AG04449 (cell line): ENCODE measurements at regions of chr6 and their contacts with region 1.

Region 1: DNA sequence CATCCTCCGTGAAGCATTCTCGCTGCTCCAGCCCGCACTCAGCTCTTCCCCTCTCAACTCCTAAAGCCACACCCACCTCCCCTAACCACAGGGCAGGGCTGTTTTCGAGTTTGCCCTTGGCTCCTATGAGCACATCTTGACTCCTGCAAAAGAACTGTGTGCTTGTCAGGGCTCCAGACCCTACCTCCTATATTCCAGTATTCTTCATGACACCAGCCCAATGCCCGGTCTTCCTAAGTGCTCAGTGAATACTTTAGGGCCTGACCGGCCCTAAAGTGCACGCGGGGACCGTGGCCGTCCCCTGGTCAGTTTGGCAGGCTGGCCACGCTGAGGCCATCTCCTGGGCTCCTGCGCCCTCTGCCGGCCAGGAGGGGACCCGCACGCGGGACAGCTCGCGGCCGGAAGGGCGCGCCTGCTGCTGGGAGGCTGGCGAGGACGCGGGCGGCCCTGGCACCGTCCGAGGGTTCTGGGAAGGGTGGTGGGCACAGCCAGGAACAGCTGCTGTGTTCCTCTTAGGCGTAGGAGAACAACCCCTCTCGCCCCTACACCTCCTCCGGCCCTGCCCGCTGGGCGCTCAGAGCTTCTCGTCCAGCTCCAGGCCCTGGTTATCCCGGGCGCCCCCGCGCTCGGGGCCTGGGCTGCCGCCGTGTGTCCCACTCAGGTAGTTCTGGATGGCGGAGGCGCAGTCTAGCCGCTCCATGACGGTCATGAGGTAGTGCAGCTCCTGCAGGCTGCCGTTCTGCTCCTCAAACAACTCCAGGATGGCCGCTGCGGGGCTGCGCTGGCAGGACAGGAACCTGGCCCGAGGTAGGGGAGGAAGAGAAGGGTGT is 11.0 kb downstream of the UNC5CL start:
- DNase-seq: no peak
- H3K4me3 ChIP-seq: peak overlapping the region; percentile 57
- CTCF ChIP-seq: peak; percentile 98

Region 2: DNA sequence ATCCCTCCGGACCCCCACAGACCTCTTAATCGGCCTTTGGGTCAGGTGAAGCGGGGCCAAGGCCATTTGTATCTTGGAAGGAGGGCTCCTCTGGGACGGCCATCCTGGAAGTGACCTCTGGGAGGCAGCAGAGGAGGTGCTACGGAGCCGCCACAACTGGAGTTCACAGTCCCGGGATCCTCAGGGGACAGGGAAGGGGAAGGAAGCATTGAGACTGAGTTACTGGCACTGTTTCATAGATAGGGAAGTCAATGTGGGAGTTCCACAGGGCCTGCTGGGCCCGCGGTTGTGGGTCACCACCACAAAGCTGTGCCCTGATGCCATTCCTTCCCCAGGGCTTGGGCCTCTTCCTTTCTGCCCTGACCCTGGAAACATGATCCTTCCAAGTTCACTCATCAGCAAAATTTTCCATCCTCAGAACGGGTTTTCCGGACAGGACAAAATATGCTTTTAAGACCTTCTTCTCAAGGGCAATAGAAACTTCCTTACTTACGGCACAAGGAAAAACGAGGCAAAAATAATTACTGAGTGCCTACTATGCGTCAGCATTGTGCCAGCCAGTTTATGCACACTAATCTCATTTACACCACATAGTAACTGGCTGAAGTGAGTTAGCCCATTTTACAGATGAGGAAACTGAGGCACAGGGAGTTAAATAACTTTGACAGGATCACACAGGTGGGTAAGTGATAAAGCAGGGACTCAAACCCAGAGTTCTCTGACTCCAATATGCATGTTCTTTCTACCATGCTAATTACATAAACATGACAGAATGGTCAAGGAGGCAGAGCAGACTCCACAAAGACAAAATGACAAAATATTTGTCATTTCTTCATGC is 132.8 kb before region 1 on chr6:
- CTCF ChIA-PET with region 1: interaction called, 389 read pairs
- POLR2A ChIA-PET with region 1: no interaction called
- DNase-seq: no peak
- H3K4me3 ChIP-seq: no peak overlapping the region
- CTCF ChIP-seq: peak; percentile 90

Region 3: GRCh38 chr6:40912158-40912946 is 115.7 kb before region 1 on chr6:
- CTCF ChIA-PET with region 1: interaction called, 11 read pairs
- POLR2A ChIA-PET with region 1: no interaction called
- DNase-seq: no peak
- H3K4me3 ChIP-seq: no peak overlapping the region
- CTCF ChIP-seq: peak; percentile 31

Region 4: GRCh38 chr6:41009669-41010068 is 18.3 kb before region 1 on chr6:
- CTCF ChIA-PET with region 1: interaction called, 11 read pairs
- POLR2A ChIA-PET with region 1: no interaction called
- DNase-seq: no peak
- H3K4me3 ChIP-seq: no peak overlapping the region
- CTCF ChIP-seq: no peak

Region 5: GRCh38 chr6:41039060-41039998 is 11.3 kb after region 1 on chr6 and contains the start of gene UNC5CL:
- CTCF ChIA-PET with region 1: interaction called, 99 read pairs
- POLR2A ChIA-PET with region 1: no interaction called
- DNase-seq: no peak
- H3K4me3 ChIP-seq: no peak within 1 kb of the TSS
- CTCF ChIP-seq: peak; percentile 66

Region 6: DNA sequence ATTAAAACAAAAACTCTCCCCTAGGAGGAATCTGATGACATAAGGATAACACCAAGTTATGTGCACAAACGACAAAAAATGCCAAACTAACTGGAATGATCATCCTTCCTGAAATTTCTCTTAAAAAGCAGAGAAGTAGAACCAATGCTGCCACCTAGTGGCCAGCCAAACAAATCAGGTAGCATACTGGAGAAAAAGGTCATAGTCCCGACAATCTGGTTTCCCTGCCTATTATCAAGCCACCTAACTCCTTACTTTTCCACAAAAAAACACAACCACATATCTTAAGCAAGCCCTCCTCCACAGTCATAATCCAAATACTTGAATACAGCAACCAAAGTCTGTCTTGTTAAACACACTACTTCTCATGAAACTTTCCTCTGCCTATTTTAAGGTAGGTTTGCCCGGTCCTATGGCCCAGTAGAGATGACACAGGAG is 38.9 kb after region 1 on chr6:
- CTCF ChIA-PET with region 1: interaction called, 35 read pairs
- POLR2A ChIA-PET with region 1: no interaction called
- DNase-seq: peak; percentile 57
- H3K4me3 ChIP-seq: no peak overlapping the region
- CTCF ChIP-seq: peak; percentile 58

Region 7: DNA sequence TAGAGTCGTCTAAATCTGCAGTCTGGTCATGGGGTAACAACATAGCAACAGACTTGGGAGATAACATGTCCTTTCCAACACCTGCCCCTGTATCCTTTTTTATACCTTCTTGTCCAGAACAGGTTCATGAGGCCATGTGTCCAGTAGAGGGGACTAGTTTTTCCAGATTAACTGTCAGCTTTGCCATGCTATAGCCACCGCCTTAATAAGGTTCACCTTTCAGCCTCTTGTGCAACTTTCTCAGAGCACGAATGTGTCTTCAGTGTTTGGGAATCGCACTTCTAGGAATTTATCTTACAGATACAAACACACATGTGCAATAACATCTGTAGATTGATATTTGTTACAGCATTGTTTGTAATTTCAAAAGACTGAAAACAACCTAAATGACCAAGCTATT is 328.8 kb after region 1 on chr6:
- CTCF ChIA-PET with region 1: no interaction called
- POLR2A ChIA-PET with region 1: no interaction called
- DNase-seq: no peak
- H3K4me3 ChIP-seq: no peak overlapping the region
- CTCF ChIP-seq: no peak